Psoas muscle (tissue), 8 donors: ENCODE measurements at regions of chr1 and their contacts with region 1.

Region 1: GRCh38 chr1:30982937-30983336 is 74.4 kb upstream of the SDC3 start:
- DNase-seq: no peak
- ATAC-seq: peak; percentile 74 to 88 (median 78)
- H3K4me3 ChIP-seq: no peak overlapping the region
- H3K27ac ChIP-seq: peak overlapping the region; percentile 59
- H3K4me1 ChIP-seq: peaks cover 61% of the 10 kb centered on the region
- H3K27me3 ChIP-seq: no peaks in the 10 kb centered on the region
- CTCF ChIP-seq: peak; percentile 41

Region 2: GRCh38 chr1:30840904-30841598 is 141.9 kb before region 1 on chr1:
- intact Hi-C with region 1: no loop called
- DNase-seq: peak in 1 of 2 donors; percentile 64
- ATAC-seq: peak; percentile 79 to 88 (median 86)
- H3K4me3 ChIP-seq: no peak overlapping the region
- H3K27ac ChIP-seq: no peak overlapping the region
- H3K4me1 ChIP-seq: peaks cover 5% of the 10 kb centered on the region
- H3K27me3 ChIP-seq: peaks cover 0 to 19% (median 0%) of the 10 kb centered on the region in 3 donors
- CTCF ChIP-seq: no peak

Region 3: GRCh38 chr1:31038360-31038759 is 55.4 kb after region 1 on chr1:
- intact Hi-C with region 1: loop called in 1 of 2 experiments (anchors 10 kb)
- DNase-seq: no peak
- ATAC-seq: peak; percentile 72 to 84 (median 81)
- H3K4me3 ChIP-seq: no peak overlapping the region
- H3K27ac ChIP-seq: peak overlapping the region; percentile 69
- H3K4me1 ChIP-seq: peaks cover 78% of the 10 kb centered on the region
- H3K27me3 ChIP-seq: no peaks in the 10 kb centered on the region
- CTCF ChIP-seq: no peak

Region 4: GRCh38 chr1:31065310-31066217 is 82.6 kb after region 1 on chr1 and contains the start of gene PUM1:
- intact Hi-C with region 1: loop called in 1 of 2 experiments (anchors 2 kb)
- DNase-seq: peak; percentile 98
- ATAC-seq: peak; percentile 99
- H3K4me3 ChIP-seq: peak within 1 kb of the TSS; percentile 96
- H3K27ac ChIP-seq: peak within 1 kb of the TSS; percentile 94
- H3K4me1 ChIP-seq: peaks cover 33% of the 10 kb centered on the region
- H3K27me3 ChIP-seq: no peaks in the 10 kb centered on the region
- CTCF ChIP-seq: peak; percentile 14
- total RNA-seq, gene PUM1: 80.0 to 93.4 (median 81.7) TPM